ENCODE measurements at regions of chr1 and their contacts with region 1.

Region 1: DNA sequence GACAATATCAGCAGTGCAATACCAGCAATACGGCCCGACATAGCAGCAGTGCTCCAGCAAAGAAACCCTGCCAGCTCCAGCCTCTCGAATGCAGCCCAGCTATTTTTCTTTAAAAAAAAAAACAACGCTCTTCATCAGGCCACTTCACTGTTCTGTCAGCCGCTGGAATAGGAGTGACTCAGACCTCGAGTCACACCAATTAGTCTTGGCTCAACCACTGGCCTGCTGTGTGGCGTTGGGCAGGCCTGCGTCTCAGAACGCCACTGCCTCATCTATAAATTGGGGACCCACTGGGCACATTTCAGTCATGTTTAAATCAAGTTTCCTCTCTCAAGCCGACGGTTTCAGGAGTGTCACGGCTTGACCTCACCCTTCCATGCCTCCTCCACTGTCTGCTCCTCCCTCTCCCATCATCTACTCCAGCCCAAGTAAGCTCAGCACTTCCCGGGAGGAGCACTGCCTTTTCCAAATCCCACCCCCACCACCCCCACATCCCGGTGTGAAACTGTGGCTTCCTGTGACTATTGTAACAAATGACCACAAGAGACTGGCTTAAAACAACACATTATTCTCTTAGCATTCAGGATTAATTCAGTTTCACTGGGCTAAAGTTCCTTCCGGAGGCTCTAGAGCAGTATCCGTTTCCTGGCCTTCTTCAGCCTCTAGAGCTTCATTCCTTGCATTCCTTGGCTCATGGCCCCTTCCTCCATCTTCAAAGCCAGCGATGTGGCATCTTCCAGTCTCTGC is 71.9 kb upstream of the EFHD2 start:
- DNase-seq: no peak
- H3K4me3 ChIP-seq: no peak overlapping the region
- H3K27ac ChIP-seq: no peak overlapping the region
- H3K4me1 ChIP-seq: peaks cover 24% of the 10 kb centered on the region
- H3K27me3 ChIP-seq: no peaks in the 10 kb centered on the region
- CTCF ChIP-seq: no peak

Region 2: DNA sequence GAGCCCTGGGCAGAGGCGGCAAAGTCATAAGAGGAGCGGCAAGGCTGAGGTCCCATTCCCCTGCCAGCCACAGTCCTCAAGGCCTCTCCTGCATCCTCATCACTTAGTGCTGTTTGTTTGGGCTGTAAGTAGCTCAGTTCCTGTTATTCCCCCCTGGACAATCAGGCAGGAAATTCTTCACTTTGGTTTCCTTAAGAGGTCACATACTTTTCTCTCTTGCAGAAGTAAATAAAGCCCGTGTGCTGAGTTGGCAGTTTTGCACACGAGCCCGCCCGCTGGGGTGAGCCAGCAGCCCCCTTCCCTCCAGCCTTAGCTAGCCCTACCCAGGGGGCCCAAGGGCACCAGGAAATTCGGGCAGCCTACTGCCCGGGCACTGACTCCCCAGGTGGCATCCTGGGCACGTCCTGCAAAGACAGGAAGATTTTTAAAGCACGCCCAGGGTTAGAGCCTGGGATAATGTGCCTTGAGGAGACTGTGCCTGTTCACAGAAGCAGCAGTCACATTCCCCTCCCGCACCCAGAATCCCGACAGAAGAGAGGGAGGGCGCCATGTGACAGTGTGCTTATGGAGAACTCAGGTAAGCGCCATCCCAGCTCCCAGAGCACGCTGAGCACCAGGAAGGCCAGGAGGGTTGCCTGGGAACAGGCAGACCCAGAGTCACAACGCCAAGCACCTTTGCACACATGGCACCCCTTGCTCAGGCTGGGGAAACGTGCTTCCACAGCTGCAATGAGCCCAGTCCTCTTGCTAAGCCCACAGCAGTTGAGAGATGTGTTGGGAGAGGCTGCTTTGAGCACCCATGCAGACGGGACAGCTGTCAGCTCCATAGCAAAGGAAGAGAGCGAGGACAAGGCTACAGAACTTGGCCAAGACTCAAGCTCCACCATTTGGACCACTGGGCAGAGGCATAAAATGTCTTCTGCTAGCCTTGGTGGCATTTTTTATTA is 328.8 kb before region 1 on chr1:
- dilution Hi-C with region 1: no loop called
- DNase-seq: no peak
- H3K4me3 ChIP-seq: no peak overlapping the region
- H3K27ac ChIP-seq: no peak overlapping the region
- H3K4me1 ChIP-seq: no peaks in the 10 kb centered on the region
- H3K27me3 ChIP-seq: no peaks in the 10 kb centered on the region
- CTCF ChIP-seq: no peak

Region 3: DNA sequence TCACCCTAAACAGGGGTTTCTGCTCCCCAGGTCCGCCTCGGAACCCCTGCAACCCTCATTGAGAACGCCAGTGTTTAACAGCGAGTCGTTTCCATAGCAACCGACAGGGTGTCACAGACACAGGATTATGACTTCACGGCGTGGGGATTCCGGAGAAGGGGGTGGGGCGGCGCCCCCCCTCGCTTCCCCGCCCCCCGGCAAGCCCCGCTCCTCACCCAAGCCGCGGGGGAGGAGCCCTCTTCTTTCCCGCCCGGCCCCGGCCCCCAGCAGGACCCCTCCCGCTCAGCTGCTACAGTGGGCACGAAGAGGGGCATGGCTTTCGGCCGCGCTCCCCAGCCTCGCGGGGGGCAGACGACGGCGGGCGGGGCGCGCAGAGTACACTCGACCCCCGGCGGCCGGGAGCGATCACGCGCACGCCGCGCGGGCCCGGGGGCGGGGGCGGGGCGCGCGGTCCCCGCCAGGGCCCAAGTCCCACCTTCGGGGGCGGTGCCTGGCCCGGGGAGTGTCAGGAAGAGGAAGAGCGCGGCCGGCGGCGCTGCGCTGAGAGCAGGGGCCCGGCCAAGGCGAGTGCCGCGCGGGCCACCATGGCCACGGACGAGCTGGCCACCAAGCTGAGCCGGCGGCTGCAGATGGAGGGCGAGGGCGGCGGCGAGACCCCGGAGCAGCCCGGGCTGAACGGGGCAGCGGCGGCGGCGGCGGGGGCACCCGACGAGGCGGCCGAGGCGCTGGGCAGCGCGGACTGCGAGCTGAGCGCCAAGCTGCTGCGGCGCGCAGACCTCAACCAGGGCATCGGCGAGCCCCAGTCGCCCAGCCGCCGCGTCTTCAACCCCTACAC is 71.8 kb after region 1 on chr1 and contains the start of gene EFHD2:
- dilution Hi-C with region 1: loop called (anchors 10 kb)
- DNase-seq: no peak
- H3K4me3 ChIP-seq: peak within 1 kb of the TSS; percentile 84 to 90 (median 90)
- H3K27ac ChIP-seq: peak within 1 kb of the TSS; percentile 74
- H3K4me1 ChIP-seq: peaks cover 28% of the 10 kb centered on the region
- H3K27me3 ChIP-seq: no peaks in the 10 kb centered on the region
- CTCF ChIP-seq: no peak
- polyA plus RNA-seq, gene EFHD2: 45.6 to 69.3 TPM (median 47.6 TPM) in 3 replicates

Region 4: GRCh38 chr1:15475752-15476314 is 138.0 kb after region 1 on chr1 and contains the start of gene CELA2B:
- dilution Hi-C with region 1: no loop called
- DNase-seq: no peak
- H3K4me3 ChIP-seq: no peak within 1 kb of the TSS
- H3K27ac ChIP-seq: no peak within 1 kb of the TSS
- H3K4me1 ChIP-seq: no peaks in the 10 kb centered on the region
- H3K27me3 ChIP-seq: no peaks in the 10 kb centered on the region
- CTCF ChIP-seq: no peak
- polyA plus RNA-seq, gene CELA2B: not detected in 3 replicates

Measured in keratinocyte (primary cell).